ENCODE measurements at regions of chr16 and their contacts with region 1.

Region 1: GRCh38 chr16:29862884-29863668 is at the start of gene CDIPT:
- DNase-seq: peak; percentile 87 to 89
- H3K4me3 ChIP-seq: peak within 1 kb of the TSS; percentile 68 to 97 (median 95)
- H3K27ac ChIP-seq: peak within 1 kb of the TSS; percentile 90 to 92
- H3K4me1 ChIP-seq: peaks cover 3 to 10% of the 10 kb centered on the region in 2 donors
- H3K27me3 ChIP-seq: no peaks in the 10 kb centered on the region
- CTCF ChIP-seq: peak; percentile 79 to 83 (median 81)
- POLR2A ChIP-seq: no peak
- total RNA-seq, gene CDIPT: 102 to 119 (median 117) TPM

Region 2: GRCh38 chr16:29805378-29806098 is 57.5 kb before region 1 on chr16:
- intact Hi-C with region 1: loop called (anchors 10 kb)
- DNase-seq: peak; percentile 97 to 98
- H3K4me3 ChIP-seq: peak overlapping the region; percentile 83 to 84 (median 83)
- H3K27ac ChIP-seq: peak overlapping the region; percentile 98 to 99
- H3K4me1 ChIP-seq: peaks cover 7 to 27% of the 10 kb centered on the region in 2 donors
- H3K27me3 ChIP-seq: no peaks in the 10 kb centered on the region
- CTCF ChIP-seq: peak in 2 of 3 donors; percentile 13 to 19
- POLR2A ChIP-seq: peak; percentile 93

Region 3: DNA sequence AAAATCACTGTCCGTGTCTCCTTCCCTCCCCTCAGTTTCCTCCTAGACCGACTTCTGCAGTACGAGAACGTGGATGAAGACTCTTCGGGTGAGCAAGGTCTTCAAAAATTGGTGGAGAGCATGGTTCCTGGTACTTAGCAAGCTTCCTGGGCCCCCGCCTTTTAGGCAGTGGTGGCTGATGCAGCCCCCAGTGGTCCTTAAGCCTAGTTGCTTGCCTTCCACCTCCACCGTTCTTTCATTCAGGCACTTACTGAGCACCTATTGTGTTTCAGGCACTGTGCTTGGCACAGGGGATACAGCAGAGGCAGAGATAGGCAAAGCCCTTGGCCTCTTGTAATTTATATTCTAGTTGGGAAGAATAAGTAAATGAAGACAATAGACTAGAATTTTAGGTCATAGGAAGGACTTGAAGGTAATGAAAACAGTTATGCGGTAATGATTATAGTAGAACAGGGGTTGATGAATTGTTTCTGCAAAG is 133.7 kb after region 1 on chr16:
- intact Hi-C with region 1: no loop called
- DNase-seq: no peak
- H3K4me3 ChIP-seq: peak overlapping the region; percentile 70 to 85 (median 84)
- H3K27ac ChIP-seq: peak overlapping the region; percentile 96
- H3K4me1 ChIP-seq: peaks cover 4 to 10% of the 10 kb centered on the region in 2 donors
- H3K27me3 ChIP-seq: no peaks in the 10 kb centered on the region
- CTCF ChIP-seq: no peak
- POLR2A ChIP-seq: no peak

Region 4: DNA sequence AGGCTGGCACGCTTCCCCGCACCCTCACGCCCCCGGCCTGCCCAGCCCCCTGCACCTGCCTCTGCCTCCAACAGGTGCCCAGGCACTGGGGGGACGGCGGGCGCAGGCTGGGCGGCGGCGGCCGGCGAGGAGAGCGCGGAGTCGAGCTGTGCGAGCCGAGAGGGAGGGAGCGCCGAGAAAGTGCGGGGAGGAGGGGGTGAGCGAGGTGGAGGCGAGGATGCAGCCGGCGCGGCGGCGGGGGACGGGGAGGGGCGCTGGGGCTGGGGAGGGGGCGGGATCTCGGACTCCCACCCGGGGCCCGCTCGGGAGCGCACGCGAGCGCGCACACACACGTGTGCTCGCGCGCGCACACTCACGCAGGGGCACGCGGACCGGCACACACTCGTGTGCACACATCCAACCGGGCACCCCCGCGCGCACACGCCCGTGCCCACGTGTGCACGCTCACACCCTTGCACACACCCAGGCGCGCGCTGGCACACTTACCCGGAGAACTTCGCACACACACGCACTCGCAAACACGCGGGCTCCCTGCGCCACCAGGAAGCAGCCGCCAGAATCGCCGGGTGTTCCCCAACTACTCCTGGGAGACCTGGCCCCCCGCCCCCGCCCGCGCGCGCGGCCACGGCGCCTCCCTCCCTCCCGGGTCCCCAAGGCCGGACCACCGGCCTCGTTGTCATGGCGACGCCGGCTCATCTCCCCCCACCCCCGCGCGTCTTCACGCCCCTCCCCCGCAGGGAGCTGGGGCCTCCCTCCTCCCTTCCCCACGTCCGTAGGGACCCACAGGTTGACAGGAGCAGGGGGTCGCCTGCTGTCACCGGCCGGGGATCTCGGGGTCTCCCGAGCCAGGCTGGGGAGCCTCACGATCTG is 148.0 kb after region 1 on chr16 and contains the start of gene DOC2A:
- intact Hi-C with region 1: loop called (anchors 10 kb)
- DNase-seq: no peak
- H3K4me3 ChIP-seq: peak within 1 kb of the TSS; percentile 22 to 73 (median 52)
- H3K27ac ChIP-seq: no peak within 1 kb of the TSS
- H3K4me1 ChIP-seq: peaks cover 9 to 13% of the 10 kb centered on the region in 2 donors
- H3K27me3 ChIP-seq: peaks cover 10 to 25% of the 10 kb centered on the region in 2 donors
- CTCF ChIP-seq: no peak
- POLR2A ChIP-seq: no peak
- total RNA-seq, gene DOC2A: 0.48 to 4.5 (median 2.3) TPM